ENCODE measurements at regions of chr3 and their contacts with region 1.

Region 1: GRCh38 chr3:16985608-16986007 is 100.9 kb downstream of the PLCL2 start:
- DNase-seq: no peak
- H3K4me3 ChIP-seq: no peak overlapping the region
- H3K27ac ChIP-seq: no peak overlapping the region
- H3K4me1 ChIP-seq: no peaks in the 10 kb centered on the region
- H3K27me3 ChIP-seq: peaks cover 0 to 1% (median 0%) of the 10 kb centered on the region in 4 experiments; a peak in 1 of 7 replicates
- CTCF ChIP-seq: no peak
- EP300 ChIP-seq: no peak
- POLR2A ChIP-seq: no peak
- RAD21 ChIP-seq: no peak

Region 2: DNA sequence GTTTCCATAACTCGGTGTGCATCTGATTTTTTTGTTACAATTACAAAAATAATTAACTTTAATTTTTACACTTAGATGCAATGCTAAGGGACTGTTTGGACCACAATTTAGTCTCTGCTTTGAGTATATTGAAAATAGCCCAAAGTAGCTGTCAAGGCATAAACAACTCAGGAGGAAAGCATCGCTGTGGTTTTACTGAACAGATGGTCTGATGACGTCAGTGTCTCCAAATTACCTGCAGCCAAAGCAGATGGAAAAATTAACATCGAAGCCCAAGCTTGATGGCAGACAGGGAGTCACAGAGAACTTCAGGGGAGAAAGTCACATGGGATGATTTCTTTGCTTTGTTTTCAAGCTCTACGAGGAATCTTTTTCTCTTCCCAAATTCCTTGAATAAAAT is 183.9 kb before region 1 on chr3:
- CTCF ChIA-PET with region 1: no interaction called
- POLR2A ChIA-PET with region 1: no interaction called
- DNase-seq: no peak
- H3K4me3 ChIP-seq: no peak overlapping the region
- H3K27ac ChIP-seq: no peak overlapping the region
- H3K4me1 ChIP-seq: peaks cover 0 to 4% (median 0%) of the 10 kb centered on the region in 4 experiments; a peak in 2 of 7 replicates
- H3K27me3 ChIP-seq: no peaks in the 10 kb centered on the region
- CTCF ChIP-seq: no peak
- EP300 ChIP-seq: no peak
- POLR2A ChIP-seq: no peak
- RAD21 ChIP-seq: no peak

Region 3: DNA sequence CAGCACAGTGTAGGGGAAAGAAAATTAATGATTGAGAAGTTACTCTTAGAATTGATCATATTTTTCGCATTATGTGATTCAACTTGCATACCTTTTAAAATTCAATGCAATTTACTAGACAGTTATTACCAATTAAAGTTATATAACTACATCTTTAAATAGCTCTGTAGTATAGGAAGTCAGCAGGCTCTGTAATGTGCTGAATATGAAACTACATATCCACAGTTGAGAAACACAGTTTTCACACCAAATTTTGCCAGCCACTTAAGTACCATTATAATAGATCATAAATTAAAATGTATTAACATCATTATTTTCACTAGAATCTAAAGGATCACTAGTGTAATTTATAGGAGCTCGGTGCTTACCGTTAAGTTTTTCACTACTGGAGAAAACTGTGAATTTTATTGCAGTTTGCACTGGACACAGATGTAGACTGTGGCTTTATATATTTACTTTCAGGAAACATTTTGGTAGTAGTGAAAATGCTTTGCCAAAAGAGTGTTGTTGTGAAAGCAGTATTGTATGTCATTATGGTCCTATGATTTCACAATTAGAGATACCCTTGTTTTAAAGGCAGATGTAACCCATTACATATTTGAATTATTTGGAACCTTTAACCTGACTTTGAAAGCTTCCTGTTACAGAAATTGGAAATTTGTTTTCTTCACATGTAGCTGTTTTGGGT is 12.8 kb after region 1 on chr3:
- CTCF ChIA-PET with region 1: interaction called, 11 read pairs
- POLR2A ChIA-PET with region 1: no interaction called
- DNase-seq: no peak
- H3K4me3 ChIP-seq: no peak overlapping the region
- H3K27ac ChIP-seq: no peak overlapping the region
- H3K4me1 ChIP-seq: peaks cover 0 to 6% (median 4%) of the 10 kb centered on the region in 4 experiments; a peak in 3 of 7 replicates
- H3K27me3 ChIP-seq: peaks cover 26 to 75% (median 65%) of the 10 kb centered on the region in 4 experiments
- CTCF ChIP-seq: no peak
- EP300 ChIP-seq: no peak
- POLR2A ChIP-seq: no peak
- RAD21 ChIP-seq: no peak

Region 4: DNA sequence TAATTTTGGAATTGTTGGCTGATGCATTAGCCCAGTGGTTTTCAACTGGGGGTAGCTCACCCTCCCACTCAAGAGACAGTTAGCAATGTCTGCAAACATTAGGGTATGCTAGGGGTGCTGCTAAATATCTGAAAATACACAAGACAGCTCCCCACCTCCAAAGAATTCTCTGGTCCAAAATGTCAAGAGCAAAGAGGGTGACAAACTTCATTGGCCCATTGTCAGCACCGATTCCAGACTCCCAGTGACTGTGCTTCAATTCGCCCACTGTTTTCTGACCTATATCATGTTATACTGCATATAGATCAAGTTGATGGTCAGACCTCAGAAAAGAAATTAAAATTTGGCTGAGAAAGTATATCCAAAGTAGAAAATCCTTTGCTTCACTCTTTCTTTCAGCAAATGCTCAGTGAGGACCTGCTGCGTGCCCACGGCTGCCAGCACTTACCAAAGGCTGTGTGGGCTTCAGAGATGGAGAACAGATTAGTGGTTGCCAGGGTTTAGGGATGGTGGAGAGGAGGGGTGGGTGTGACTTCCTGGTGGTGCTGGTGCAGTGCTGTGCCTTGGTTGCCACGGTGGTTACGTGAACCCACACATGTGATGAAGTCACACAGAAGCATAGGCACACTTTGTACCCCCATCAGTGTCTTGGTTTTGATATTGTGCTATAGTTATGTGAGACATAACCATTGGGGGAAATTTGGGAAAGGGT is 103.2 kb after region 1 on chr3:
- CTCF ChIA-PET with region 1: no interaction called
- POLR2A ChIA-PET with region 1: no interaction called
- DNase-seq: no peak
- H3K4me3 ChIP-seq: no peak overlapping the region
- H3K27ac ChIP-seq: no peak overlapping the region
- H3K4me1 ChIP-seq: peaks cover 0 to 6% (median 4%) of the 10 kb centered on the region in 4 experiments; a peak in 3 of 7 replicates
- H3K27me3 ChIP-seq: no peaks in the 10 kb centered on the region
- CTCF ChIP-seq: no peak
- EP300 ChIP-seq: no peak
- POLR2A ChIP-seq: no peak
- RAD21 ChIP-seq: no peak

Region 5: GRCh38 chr3:17355591-17355990 is 370.0 kb after region 1 on chr3:
- CTCF ChIA-PET with region 1: no interaction called
- POLR2A ChIA-PET with region 1: no interaction called
- DNase-seq: no peak
- H3K4me3 ChIP-seq: no peak overlapping the region
- H3K27ac ChIP-seq: no peak overlapping the region
- H3K4me1 ChIP-seq: peaks cover 0 to 3% (median 0%) of the 10 kb centered on the region in 4 experiments; a peak in 1 of 7 replicates
- H3K27me3 ChIP-seq: peaks cover 0 to 1% (median 0%) of the 10 kb centered on the region in 4 experiments; a peak in 1 of 7 replicates
- CTCF ChIP-seq: no peak
- EP300 ChIP-seq: no peak
- POLR2A ChIP-seq: no peak
- RAD21 ChIP-seq: no peak